ENCODE measurements at regions of chr12 and their contacts with region 1.

Region 1: DNA sequence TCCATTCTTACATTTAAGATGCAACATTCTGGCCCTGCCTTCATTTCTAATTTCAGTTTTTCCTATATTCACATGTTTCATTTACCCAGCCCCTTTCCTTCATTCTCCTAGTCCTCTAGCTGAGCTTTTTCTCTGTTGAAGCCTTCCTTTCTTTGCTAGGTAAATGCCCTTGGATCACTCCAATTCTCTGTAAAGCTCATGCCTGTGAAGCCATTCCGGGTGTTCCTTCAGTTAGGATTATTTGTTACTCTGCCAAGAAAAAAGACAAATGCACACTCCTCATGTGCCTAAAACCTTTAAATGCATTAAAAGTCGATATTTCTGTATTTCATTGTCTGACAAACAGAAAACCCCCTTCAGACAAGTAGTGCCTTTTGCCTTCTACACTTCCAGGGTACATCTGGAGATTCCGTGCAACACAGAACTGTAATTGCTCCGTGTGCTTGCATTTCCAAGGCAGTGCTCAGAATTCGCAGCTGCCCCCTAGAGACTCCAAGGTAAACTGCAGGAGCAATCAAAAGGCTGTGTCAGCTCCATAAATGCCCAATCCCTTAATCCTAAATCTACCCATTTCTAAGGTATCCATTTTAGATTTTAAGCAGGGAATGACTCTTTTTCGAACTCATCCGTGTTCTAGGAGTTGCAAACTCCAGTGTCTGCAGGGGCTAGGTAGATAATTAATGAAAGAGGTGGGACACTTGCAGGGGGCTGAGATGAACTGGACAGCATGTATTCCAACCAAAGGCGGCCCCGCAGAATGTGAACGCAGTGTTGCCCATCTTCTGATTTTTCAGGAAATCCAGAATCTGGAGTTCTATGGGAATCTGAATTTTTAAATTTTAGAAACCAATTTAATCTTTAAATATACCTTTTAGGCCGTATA is 320.2 kb downstream of the GRIN2B start:
- DNase-seq: peak; percentile 62
- H3K4me3 Mint-ChIP-seq: no peak overlapping the region
- H3K27ac Mint-ChIP-seq: no peak overlapping the region
- H3K4me1 Mint-ChIP-seq: peaks cover 16% of the 10 kb centered on the region
- H3K27me3 Mint-ChIP-seq: no peaks in the 10 kb centered on the region
- CTCF ChIP-seq: peak; percentile 85

Region 2: GRCh38 chr12:13255792-13256691 is 405.2 kb before region 1 on chr12:
- CTCF ChIA-PET with region 1: interaction called, 10 read pairs
- intact Hi-C with region 1: no loop called
- DNase-seq: peak; percentile 94
- H3K4me3 Mint-ChIP-seq: peak overlapping the region; percentile 53
- H3K27ac Mint-ChIP-seq: peak overlapping the region; percentile 16
- H3K4me1 Mint-ChIP-seq: peaks cover 11% of the 10 kb centered on the region
- H3K27me3 Mint-ChIP-seq: no peaks in the 10 kb centered on the region
- CTCF ChIP-seq: peak; percentile 86

Region 3: GRCh38 chr12:13534645-13535398 is 126.4 kb before region 1 on chr12:
- CTCF ChIA-PET with region 1: no interaction called
- intact Hi-C with region 1: loop called (anchors 10 kb)
- DNase-seq: peak; percentile 83
- H3K4me3 Mint-ChIP-seq: no peak overlapping the region
- H3K27ac Mint-ChIP-seq: no peak overlapping the region
- H3K4me1 Mint-ChIP-seq: peaks cover 8% of the 10 kb centered on the region
- H3K27me3 Mint-ChIP-seq: no peaks in the 10 kb centered on the region
- CTCF ChIP-seq: peak; percentile 88